ENCODE measurements at regions of chr6 and their contacts with region 1.

Region 1: DNA sequence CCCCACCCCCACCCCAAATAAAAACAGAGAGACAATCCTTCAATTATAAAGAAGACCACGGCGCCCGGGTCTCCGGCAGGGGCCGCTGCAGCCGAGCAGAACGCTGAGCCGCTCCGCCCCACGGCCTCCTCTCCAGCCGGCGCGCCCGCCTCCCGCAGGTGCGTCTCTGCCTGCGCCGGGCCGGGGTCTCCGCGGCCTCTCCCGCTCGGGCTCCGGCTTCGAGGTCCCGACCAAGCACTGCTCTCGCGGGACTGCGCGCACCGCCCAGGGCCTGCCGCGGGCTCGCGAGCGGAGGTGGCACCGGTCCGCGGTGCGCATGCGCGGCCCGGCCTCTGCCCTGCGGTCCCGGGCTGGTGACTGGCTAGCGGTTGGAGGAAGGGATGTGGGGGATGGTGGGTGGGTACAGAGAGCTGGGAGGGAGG is 241 bp upstream of the SIRT5 start:
- DNase-seq: peak; percentile 99
- ATAC-seq: peak; percentile 89
- H3K4me3 ChIP-seq: peak overlapping the region in 4 of 5 experiments; percentile 80 to 99 (median 84)
- H3K4me3 Mint-ChIP-seq: peak overlapping the region; percentile 95
- H3K27ac ChIP-seq: peak overlapping the region; percentile 87 to 94
- H3K27ac Mint-ChIP-seq: peak overlapping the region; percentile 98
- H3K4me1 ChIP-seq: peaks cover 15 to 16% of the 10 kb centered on the region in 2 donors
- H3K4me1 Mint-ChIP-seq: peaks cover 27% of the 10 kb centered on the region
- H3K27me3 ChIP-seq: no peaks in the 10 kb centered on the region
- H3K27me3 Mint-ChIP-seq: no peaks in the 10 kb centered on the region
- CTCF ChIP-seq: peak; percentile 48

Region 2: GRCh38 chr6:12605888-12606345 is 968.2 kb before region 1 on chr6:
- CTCF ChIA-PET with region 1: no interaction called
- POLR2A ChIA-PET with region 1: no interaction called
- intact Hi-C with region 1: no loop called
- DNase-seq: peak; percentile 76
- ATAC-seq: peak; percentile 83
- H3K4me3 ChIP-seq: peak overlapping the region in 3 of 5 experiments; percentile 32 to 50 (median 45)
- H3K4me3 Mint-ChIP-seq: peak overlapping the region; percentile 69
- H3K27ac ChIP-seq: no peak overlapping the region
- H3K27ac Mint-ChIP-seq: peak overlapping the region; percentile 33
- H3K4me1 ChIP-seq: peaks cover 12 to 20% of the 10 kb centered on the region in 2 donors
- H3K4me1 Mint-ChIP-seq: peaks cover 35% of the 10 kb centered on the region
- H3K27me3 ChIP-seq: peaks cover 0 to under 1% (median 0%) of the 10 kb centered on the region in 4 experiments
- H3K27me3 Mint-ChIP-seq: no peaks in the 10 kb centered on the region
- CTCF ChIP-seq: peak; percentile 80

Region 3: GRCh38 chr6:12709116-12709515 is 865.0 kb before region 1 on chr6:
- CTCF ChIA-PET with region 1: no interaction called
- POLR2A ChIA-PET with region 1: no interaction called
- intact Hi-C with region 1: no loop called
- DNase-seq: no peak
- ATAC-seq: no peak
- H3K4me3 ChIP-seq: no peak overlapping the region
- H3K4me3 Mint-ChIP-seq: no peak overlapping the region
- H3K27ac ChIP-seq: no peak overlapping the region
- H3K27ac Mint-ChIP-seq: no peak overlapping the region
- H3K4me1 ChIP-seq: no peaks in the 10 kb centered on the region
- H3K4me1 Mint-ChIP-seq: no peaks in the 10 kb centered on the region
- H3K27me3 ChIP-seq: peaks cover 0 to 6% (median 1%) of the 10 kb centered on the region in 4 experiments
- H3K27me3 Mint-ChIP-seq: peaks cover 38% of the 10 kb centered on the region
- CTCF ChIP-seq: no peak

Region 4: GRCh38 chr6:13336553-13336952 is 237.6 kb before region 1 on chr6:
- CTCF ChIA-PET with region 1: interaction called, 41 read pairs
- POLR2A ChIA-PET with region 1: interaction called, 3 read pairs
- intact Hi-C with region 1: loop called (anchors 1 kb)
- DNase-seq: peak; percentile 84
- ATAC-seq: peak; percentile 81
- H3K4me3 ChIP-seq: no peak overlapping the region
- H3K4me3 Mint-ChIP-seq: no peak overlapping the region
- H3K27ac ChIP-seq: no peak overlapping the region
- H3K27ac Mint-ChIP-seq: peak overlapping the region; percentile 5
- H3K4me1 ChIP-seq: peaks cover 40% of the 10 kb centered on the region in 2 donors
- H3K4me1 Mint-ChIP-seq: peaks cover 46% of the 10 kb centered on the region
- H3K27me3 ChIP-seq: no peaks in the 10 kb centered on the region
- H3K27me3 Mint-ChIP-seq: no peaks in the 10 kb centered on the region
- CTCF ChIP-seq: peak; percentile 90

Region 5: DNA sequence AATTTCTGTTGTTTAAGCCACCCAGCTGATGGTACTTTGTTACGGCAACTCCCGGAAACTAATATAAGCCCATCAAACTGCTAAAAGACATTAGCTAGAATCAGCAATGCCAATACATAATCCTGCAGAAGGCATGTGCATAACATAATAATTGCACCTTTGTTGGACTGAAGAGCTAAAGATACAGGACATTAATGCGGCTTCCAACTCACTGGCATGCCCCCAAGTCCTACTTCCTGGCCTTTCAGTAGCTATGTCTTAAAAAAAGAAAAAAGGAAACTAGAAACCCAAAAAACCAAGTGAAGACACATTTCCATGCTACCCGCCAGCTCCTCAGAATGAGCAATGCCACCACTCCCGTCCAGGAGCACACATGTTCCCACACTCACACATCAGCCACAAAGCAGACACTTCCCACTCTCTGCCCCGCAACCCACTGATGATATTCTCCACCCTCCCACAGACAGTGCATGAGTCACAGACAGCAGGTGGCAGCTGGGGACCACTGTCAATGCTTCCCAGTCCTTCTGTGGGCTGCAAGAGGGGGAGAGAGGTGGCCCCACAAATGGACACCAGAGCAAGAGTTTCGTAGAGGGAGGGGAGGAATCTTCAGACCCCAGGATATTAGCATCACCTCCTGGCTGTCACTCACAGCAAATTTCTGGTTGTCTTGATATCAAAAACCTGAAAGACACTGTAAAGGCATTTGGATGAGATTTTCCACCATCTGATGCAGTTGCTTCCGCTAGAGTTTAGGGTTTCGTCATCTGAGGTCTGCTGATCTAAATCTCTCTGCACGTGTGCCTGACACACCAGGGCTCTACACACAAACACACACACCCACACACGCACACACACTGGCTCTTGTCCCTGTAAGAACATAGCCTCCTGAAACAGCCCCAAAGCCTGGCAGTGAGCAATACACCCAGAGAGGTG is 119.6 kb before region 1 on chr6:
- CTCF ChIA-PET with region 1: interaction called, 24 read pairs
- POLR2A ChIA-PET with region 1: no interaction called
- intact Hi-C with region 1: no loop called
- DNase-seq: peak; percentile 75
- ATAC-seq: peak; percentile 77
- H3K4me3 ChIP-seq: peak overlapping the region in 3 of 5 experiments; percentile 7 to 26 (median 12)
- H3K4me3 Mint-ChIP-seq: peak overlapping the region; percentile 76
- H3K27ac ChIP-seq: peak overlapping the region; percentile 23 to 50
- H3K27ac Mint-ChIP-seq: peak overlapping the region; percentile 88
- H3K4me1 ChIP-seq: peaks cover 36 to 41% of the 10 kb centered on the region in 2 donors
- H3K4me1 Mint-ChIP-seq: peaks cover 56% of the 10 kb centered on the region
- H3K27me3 ChIP-seq: no peaks in the 10 kb centered on the region
- H3K27me3 Mint-ChIP-seq: no peaks in the 10 kb centered on the region
- CTCF ChIP-seq: peak; percentile 17

Region 6: DNA sequence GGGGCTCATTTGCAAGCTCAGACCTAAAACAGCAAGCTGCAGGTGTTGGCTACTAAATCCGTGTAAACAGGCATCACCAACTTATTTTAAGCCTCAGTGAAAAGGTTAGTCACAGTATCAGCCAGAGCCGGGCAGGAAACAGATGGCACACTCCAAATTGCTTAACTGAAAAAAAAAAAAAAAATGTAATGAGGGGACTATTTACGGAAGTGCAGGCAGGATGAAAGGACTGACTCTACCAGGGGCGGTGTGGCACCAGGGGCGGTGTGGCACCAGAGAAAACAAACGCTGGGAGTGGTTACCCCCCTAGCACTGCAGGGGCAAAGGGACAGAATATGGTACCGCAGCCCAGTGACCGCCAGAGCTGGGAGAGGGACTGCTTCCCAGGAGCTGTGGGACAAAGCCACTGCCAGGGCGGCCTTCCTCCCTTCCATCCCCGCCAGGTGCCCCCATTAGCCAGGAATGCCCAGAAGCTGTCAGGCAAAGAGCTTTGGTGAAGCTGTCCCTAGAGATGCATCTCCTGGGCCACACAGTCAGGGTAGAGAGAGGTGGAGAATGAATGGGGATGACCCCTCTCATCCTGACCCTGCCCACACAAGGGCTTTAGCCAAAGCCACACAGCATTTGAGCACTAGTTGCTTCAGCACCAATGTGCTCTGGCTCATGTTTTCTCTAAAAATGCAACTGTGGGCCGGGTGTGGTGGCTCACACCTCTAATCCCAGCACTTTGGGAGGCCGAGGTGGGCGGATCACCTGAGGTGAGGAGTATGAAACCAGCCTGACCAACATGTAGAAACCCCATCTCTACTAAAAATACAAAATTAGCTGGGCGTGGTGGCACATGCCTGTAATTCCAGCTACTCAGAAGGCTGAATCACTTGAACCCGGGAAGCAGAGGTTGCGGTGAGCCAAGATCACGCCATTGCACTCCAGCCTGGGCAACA is 47.2 kb before region 1 on chr6:
- CTCF ChIA-PET with region 1: interaction called, 17 read pairs
- POLR2A ChIA-PET with region 1: interaction called, 9 read pairs
- intact Hi-C with region 1: loop called (anchors 1 kb)
- DNase-seq: peak; percentile 86
- ATAC-seq: peak; percentile 88
- H3K4me3 ChIP-seq: peak overlapping the region in 3 of 5 experiments; percentile 0 to 33 (median 11)
- H3K4me3 Mint-ChIP-seq: peak overlapping the region; percentile 40
- H3K27ac ChIP-seq: peak overlapping the region; percentile 76 to 89
- H3K27ac Mint-ChIP-seq: peak overlapping the region; percentile 88
- H3K4me1 ChIP-seq: peaks cover 38 to 41% of the 10 kb centered on the region in 2 donors
- H3K4me1 Mint-ChIP-seq: peaks cover 47% of the 10 kb centered on the region
- H3K27me3 ChIP-seq: no peaks in the 10 kb centered on the region
- H3K27me3 Mint-ChIP-seq: no peaks in the 10 kb centered on the region
- CTCF ChIP-seq: peak; percentile 33

Region 7: GRCh38 chr6:13593720-13594119 is 19.6 kb after region 1 on chr6:
- CTCF ChIA-PET with region 1: interaction called, 13 read pairs
- POLR2A ChIA-PET with region 1: no interaction called
- intact Hi-C with region 1: no loop called
- DNase-seq: no peak
- ATAC-seq: no peak
- H3K4me3 ChIP-seq: no peak overlapping the region
- H3K4me3 Mint-ChIP-seq: no peak overlapping the region
- H3K27ac ChIP-seq: no peak overlapping the region
- H3K27ac Mint-ChIP-seq: no peak overlapping the region
- H3K4me1 ChIP-seq: no peaks in the 10 kb centered on the region
- H3K4me1 Mint-ChIP-seq: no peaks in the 10 kb centered on the region
- H3K27me3 ChIP-seq: no peaks in the 10 kb centered on the region
- H3K27me3 Mint-ChIP-seq: no peaks in the 10 kb centered on the region
- CTCF ChIP-seq: no peak

Region 8: GRCh38 chr6:13696226-13696625 is 122.1 kb after region 1 on chr6:
- CTCF ChIA-PET with region 1: no interaction called
- POLR2A ChIA-PET with region 1: no interaction called
- intact Hi-C with region 1: no loop called
- DNase-seq: no peak
- ATAC-seq: no peak
- H3K4me3 ChIP-seq: no peak overlapping the region
- H3K4me3 Mint-ChIP-seq: no peak overlapping the region
- H3K27ac ChIP-seq: no peak overlapping the region
- H3K27ac Mint-ChIP-seq: no peak overlapping the region
- H3K4me1 ChIP-seq: peaks cover 27 to 30% of the 10 kb centered on the region in 2 donors
- H3K4me1 Mint-ChIP-seq: peaks cover 50% of the 10 kb centered on the region
- H3K27me3 ChIP-seq: no peaks in the 10 kb centered on the region
- H3K27me3 Mint-ChIP-seq: no peaks in the 10 kb centered on the region
- CTCF ChIP-seq: no peak

Region 9: DNA sequence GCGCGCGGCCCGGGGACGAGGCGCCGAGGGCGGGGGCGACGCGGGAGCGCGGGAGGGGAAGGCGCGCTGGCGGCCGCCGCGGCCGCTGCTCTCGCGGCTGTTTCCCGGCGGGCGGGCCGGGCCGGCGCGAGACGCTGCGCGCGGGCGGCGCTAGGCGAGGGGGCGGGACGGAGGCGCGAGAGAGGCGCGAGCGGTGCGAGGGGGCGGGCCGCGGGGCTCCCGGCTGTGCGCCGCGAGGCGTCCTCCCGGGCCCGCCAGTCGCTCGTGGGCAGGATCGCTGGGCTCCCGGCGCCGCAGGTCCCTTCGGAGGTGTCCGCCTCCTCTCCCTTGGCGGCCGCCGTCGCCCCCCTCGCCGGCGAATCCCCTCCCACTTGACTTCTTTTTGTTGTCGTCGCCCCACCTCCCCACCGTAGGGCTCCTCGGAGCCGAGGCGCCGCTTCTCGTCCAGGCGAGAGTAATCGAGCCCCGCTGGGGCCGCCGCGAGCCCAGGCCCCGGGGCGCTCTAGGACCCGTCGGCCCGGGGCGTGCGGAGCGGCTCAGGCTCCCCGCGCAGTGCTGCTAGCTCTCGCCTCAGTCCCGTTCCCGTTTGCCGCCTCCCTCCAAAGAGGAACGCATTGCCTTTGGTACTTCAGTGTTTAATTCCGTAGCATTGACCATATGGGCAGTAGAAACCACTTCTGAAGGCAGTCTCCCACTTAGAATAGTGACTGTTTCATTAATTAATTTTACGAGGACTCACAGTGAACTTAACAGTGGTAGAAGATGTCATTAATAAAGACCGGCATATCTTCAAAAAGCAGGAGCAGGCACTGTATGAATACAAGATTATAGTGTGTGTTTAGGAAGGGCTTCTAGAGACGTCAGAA is 137.8 kb after region 1 on chr6 and contains the start of gene RANBP9:
- CTCF ChIA-PET with region 1: interaction called, 6 read pairs
- POLR2A ChIA-PET with region 1: no interaction called
- intact Hi-C with region 1: loop called (anchors 1 kb)
- DNase-seq: peak; percentile 94
- ATAC-seq: peak; percentile 82
- H3K4me3 ChIP-seq: peak within 1 kb of the TSS; percentile 58 to 88 (median 78)
- H3K4me3 Mint-ChIP-seq: peak within 1 kb of the TSS; percentile 96
- H3K27ac ChIP-seq: peak within 1 kb of the TSS; percentile 80 to 84
- H3K27ac Mint-ChIP-seq: peak within 1 kb of the TSS; percentile 96
- H3K4me1 ChIP-seq: peaks cover 29 to 33% of the 10 kb centered on the region in 2 donors
- H3K4me1 Mint-ChIP-seq: peaks cover 41% of the 10 kb centered on the region
- H3K27me3 ChIP-seq: no peaks in the 10 kb centered on the region
- H3K27me3 Mint-ChIP-seq: no peaks in the 10 kb centered on the region
- CTCF ChIP-seq: no peak
- total RNA-seq, gene RANBP9: 34.1 and 39.0 TPM in 2 replicates

Measured in B cell (primary cell).